IMR-90 (cell line): ENCODE measurements at regions of chr10 and their contacts with region 1.

Region 1: GRCh38 chr10:51699475-51700227 is at the start of gene CSTF2T:
- DNase-seq: peak; percentile 96
- ATAC-seq: peak; percentile 93
- H3K4me3 ChIP-seq: peak within 1 kb of the TSS; percentile 80
- H3K27ac ChIP-seq: peak within 1 kb of the TSS; percentile 98
- H3K4me1 ChIP-seq: peaks cover 13% of the 10 kb centered on the region
- H3K27me3 ChIP-seq: no peaks in the 10 kb centered on the region
- CTCF ChIP-seq: no peak
- POLR2A ChIP-seq: peak; percentile 68; the same call in 1 of the 2 replicates
- RAD21 ChIP-seq: no peak; the same call in 1 of the 2 replicates
- total RNA-seq, gene CSTF2T: 18.6 and 22.5 TPM in 2 replicates

Region 2: DNA sequence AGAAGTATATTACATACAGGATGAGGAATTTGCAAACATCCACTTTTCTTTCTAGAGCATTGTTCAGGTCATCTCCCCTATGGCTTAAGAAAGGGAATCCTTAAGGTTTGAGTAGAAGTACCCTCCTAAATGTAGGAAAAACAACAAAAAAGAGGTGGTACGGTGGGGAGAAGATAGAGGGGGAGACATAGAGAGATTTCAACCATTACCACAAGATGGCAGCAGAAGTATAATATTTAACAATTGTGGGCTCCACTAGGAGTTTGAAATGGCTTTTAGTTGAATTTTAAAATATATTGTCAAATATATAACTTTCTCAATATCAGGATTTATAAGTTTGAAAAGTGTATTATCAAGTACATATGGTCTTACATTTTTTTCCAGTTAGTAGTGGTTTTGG is 698.1 kb before region 1 on chr10:
- CTCF ChIA-PET with region 1: no interaction called
- POLR2A ChIA-PET with region 1: no interaction called
- dilution Hi-C with region 1: no loop called
- in situ Hi-C with region 1: no loop called
- intact Hi-C with region 1: loop called (anchors 10 kb)
- DNase-seq: no peak
- ATAC-seq: peak; percentile 53
- H3K4me3 ChIP-seq: no peak overlapping the region
- H3K27ac ChIP-seq: no peak overlapping the region
- H3K4me1 ChIP-seq: peaks cover 14% of the 10 kb centered on the region
- H3K27me3 ChIP-seq: no peaks in the 10 kb centered on the region
- CTCF ChIP-seq: peak; percentile 70
- POLR2A ChIP-seq: no peak
- RAD21 ChIP-seq: peak; percentile 65

Region 3: GRCh38 chr10:51074238-51075028 is 625.2 kb before region 1 on chr10 and contains the start of gene PRKG1:
- CTCF ChIA-PET with region 1: no interaction called
- POLR2A ChIA-PET with region 1: interaction called, 3 read pairs
- dilution Hi-C with region 1: no loop called
- in situ Hi-C with region 1: no loop called
- intact Hi-C with region 1: loop called (anchors 10 kb)
- DNase-seq: peak; percentile 85
- ATAC-seq: peak; percentile 92
- H3K4me3 ChIP-seq: peak within 1 kb of the TSS; percentile 62
- H3K27ac ChIP-seq: peak within 1 kb of the TSS; percentile 82
- H3K4me1 ChIP-seq: peaks cover 6% of the 10 kb centered on the region; the same call in 1 of the 2 replicates
- H3K27me3 ChIP-seq: no peaks in the 10 kb centered on the region
- CTCF ChIP-seq: no peak
- POLR2A ChIP-seq: 0 out of 2 replicates have a peak, but pooled peaks have one; percentile 19
- RAD21 ChIP-seq: peak; percentile 16; the same call in 1 of the 2 replicates
- total RNA-seq, gene PRKG1: 18.3 and 22.5 TPM in 2 replicates

Region 4: DNA sequence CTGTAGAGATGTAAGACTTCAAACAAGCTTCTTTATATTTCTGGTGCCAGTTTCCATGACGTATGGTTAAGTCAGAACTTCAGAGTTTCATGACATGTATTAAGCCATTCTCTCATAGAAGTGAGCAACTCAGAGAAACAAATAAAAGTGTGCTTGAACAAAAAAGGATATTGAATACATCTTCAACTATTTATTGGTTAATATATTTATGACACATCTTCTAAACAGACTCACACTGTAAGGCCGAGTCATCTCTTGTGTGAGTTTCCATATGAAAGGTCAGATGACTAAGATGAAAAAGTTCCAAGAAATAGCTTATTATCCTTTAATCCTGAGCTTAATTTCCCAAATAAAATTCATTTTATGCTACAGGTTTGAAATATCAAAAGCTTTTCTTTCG is 105.2 kb after region 1 on chr10:
- CTCF ChIA-PET with region 1: no interaction called
- POLR2A ChIA-PET with region 1: no interaction called
- dilution Hi-C with region 1: no loop called
- in situ Hi-C with region 1: no loop called
- intact Hi-C with region 1: no loop called
- DNase-seq: peak; percentile 84
- ATAC-seq: peak; percentile 54
- H3K4me3 ChIP-seq: no peak overlapping the region
- H3K27ac ChIP-seq: no peak overlapping the region
- H3K4me1 ChIP-seq: peaks cover 3% of the 10 kb centered on the region; the same call in 1 of the 2 replicates
- H3K27me3 ChIP-seq: no peaks in the 10 kb centered on the region
- CTCF ChIP-seq: no peak
- POLR2A ChIP-seq: no peak
- RAD21 ChIP-seq: no peak

Region 5: DNA sequence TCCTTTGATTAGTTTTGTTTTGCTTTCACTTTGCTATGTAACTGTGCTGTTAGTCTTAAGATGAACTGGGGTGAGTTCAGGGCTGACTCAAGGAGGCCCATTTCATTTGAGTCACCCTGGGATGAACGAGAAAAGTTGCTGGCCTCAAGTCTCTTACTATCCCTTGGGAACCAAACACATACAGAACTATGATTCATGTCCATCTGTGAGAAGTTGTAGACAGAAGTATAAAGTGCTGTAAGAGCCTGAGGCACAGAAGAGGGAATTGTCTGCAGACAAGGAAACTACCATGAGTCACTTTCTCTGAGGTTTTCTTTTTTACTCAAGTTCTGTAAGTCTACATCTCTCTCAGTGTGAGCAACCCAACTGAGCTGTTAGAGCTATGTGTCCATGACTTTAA is 179.6 kb after region 1 on chr10:
- CTCF ChIA-PET with region 1: no interaction called
- POLR2A ChIA-PET with region 1: no interaction called
- dilution Hi-C with region 1: no loop called
- in situ Hi-C with region 1: no loop called
- intact Hi-C with region 1: loop called (anchors 5 kb)
- DNase-seq: peak; percentile 100
- ATAC-seq: peak; percentile 97
- H3K4me3 ChIP-seq: no peak overlapping the region
- H3K27ac ChIP-seq: no peak overlapping the region
- H3K4me1 ChIP-seq: peaks cover 4% of the 10 kb centered on the region
- H3K27me3 ChIP-seq: no peaks in the 10 kb centered on the region
- CTCF ChIP-seq: no peak
- POLR2A ChIP-seq: no peak
- RAD21 ChIP-seq: no peak; the same call in 1 of the 2 replicates

Region 6: DNA sequence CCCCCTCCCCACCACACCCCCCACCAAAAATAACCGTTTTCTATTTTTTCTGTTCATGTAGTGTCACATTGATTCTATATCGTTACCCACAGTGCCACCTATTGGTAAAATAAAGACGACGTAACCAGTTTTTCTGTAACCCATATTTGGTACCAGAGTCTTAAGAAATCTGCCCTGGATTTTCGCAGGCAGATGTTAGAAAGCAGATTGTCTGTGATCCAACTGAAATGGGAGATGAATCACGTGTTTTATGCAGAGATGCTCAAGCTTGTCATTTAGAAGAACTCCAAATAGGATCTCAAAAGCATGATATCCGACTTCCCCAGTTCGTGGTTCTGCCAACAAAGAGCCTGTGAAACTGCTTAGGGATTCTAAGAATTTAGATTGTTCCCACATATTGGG is 260.8 kb after region 1 on chr10:
- CTCF ChIA-PET with region 1: no interaction called
- POLR2A ChIA-PET with region 1: no interaction called
- dilution Hi-C with region 1: no loop called
- in situ Hi-C with region 1: no loop called
- intact Hi-C with region 1: loop called (anchors 5 kb)
- DNase-seq: peak; percentile 76
- ATAC-seq: peak; percentile 66
- H3K4me3 ChIP-seq: no peak overlapping the region
- H3K27ac ChIP-seq: no peak overlapping the region
- H3K4me1 ChIP-seq: no peaks in the 10 kb centered on the region
- H3K27me3 ChIP-seq: no peaks in the 10 kb centered on the region
- CTCF ChIP-seq: peak; percentile 63
- POLR2A ChIP-seq: no peak
- RAD21 ChIP-seq: peak; percentile 73